Naive thymus-derived CD4-positive, alpha-beta T cell (primary cell): ENCODE measurements at regions of chr3 and their contacts with region 1.

Region 1: GRCh38 chr3:134485718-134486576 is at the starts of genes ANAPC13 and CEP63:
- DNase-seq: peak; percentile 84 to 96 (median 96)
- ATAC-seq: peak; percentile 89
- H3K4me3 ChIP-seq: peak within 1 kb of the TSS; percentile 84
- H3K4me3 Mint-ChIP-seq: peak within 1 kb of the TSS; percentile 89 to 100 (median 99)
- H3K27ac ChIP-seq: peak within 1 kb of the TSS; percentile 87
- H3K27ac Mint-ChIP-seq: peak within 1 kb of the TSS; percentile 94 to 100 (median 99)
- H3K4me1 ChIP-seq: peaks cover 20 to 23% of the 10 kb centered on the region in 2 donors
- H3K4me1 Mint-ChIP-seq: peaks cover 41 to 80% (median 69%) of the 10 kb centered on the region in 7 donors
- H3K27me3 ChIP-seq: no peaks in the 10 kb centered on the region
- H3K27me3 Mint-ChIP-seq: no peaks in the 10 kb centered on the region
- total RNA-seq, gene ANAPC13: 21.2 to 36.7 (median 25.0) TPM
- total RNA-seq, gene CEP63: 21.1 to 42.3 (median 26.4) TPM

Region 2: DNA sequence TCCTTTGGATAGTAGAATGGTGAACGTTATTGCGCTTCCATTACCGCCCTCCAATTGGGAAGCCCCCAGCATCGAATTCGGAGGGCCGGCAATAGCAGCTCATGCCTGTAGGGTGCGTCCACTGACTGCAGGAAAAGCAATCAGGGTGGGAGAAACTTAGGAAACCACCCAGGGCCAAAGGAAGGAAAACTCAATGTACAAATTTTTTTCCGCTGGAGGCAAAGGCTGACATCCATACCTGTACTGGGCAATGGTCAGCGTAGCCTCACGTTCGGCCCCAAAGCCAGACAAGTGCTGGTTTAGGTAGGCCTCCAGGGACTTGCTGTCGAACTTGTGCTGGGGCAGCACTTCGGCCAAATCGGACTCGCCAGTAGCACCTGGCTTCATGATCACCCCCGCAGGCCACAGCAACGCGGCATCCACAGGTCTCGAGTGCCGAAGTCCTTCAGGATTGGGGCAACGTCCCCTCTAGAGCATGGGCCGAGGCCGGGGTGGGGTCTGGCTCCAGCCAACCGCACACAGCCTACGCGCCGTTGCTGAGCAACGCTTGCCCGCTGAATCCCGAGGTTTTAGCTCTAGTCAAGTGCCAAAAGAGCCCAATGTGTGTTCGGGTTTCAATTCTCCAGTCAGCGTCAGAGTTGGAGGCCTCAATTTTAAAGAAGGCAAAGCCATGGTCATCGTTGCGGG is 1826.4 kb before region 1 on chr3 and contains the start of gene ACAD11:
- CTCF ChIA-PET with region 1: no interaction called
- POLR2A ChIA-PET with region 1: no interaction called
- intact Hi-C with region 1: loop called in 1 of 2 experiments (anchors 1 kb)
- DNase-seq: peak in 7 of 9 donors; percentile 2 to 55 (median 18)
- ATAC-seq: peak; percentile 54
- H3K4me3 ChIP-seq: peak within 1 kb of the TSS; percentile 99
- H3K4me3 Mint-ChIP-seq: peak within 1 kb of the TSS; percentile 84 to 98 (median 97)
- H3K27ac ChIP-seq: peak within 1 kb of the TSS; percentile 92
- H3K27ac Mint-ChIP-seq: peak within 1 kb of the TSS; percentile 95 to 98 (median 96)
- H3K4me1 ChIP-seq: peaks cover 9 to 19% of the 10 kb centered on the region in 2 donors
- H3K4me1 Mint-ChIP-seq: peaks cover 42 to 78% (median 67%) of the 10 kb centered on the region in 7 donors
- H3K27me3 ChIP-seq: no peaks in the 10 kb centered on the region
- H3K27me3 Mint-ChIP-seq: no peaks in the 10 kb centered on the region
- total RNA-seq, gene ACAD11: 15.0 to 33.7 (median 27.5) TPM

Region 3: GRCh38 chr3:133661454-133662277 is 824.3 kb before region 1 on chr3 and contains the start of gene TOPBP1:
- CTCF ChIA-PET with region 1: no interaction called
- POLR2A ChIA-PET with region 1: no interaction called
- intact Hi-C with region 1: loop called (anchors 1 to 2 kb)
- DNase-seq: peak; percentile 68 to 88 (median 85)
- ATAC-seq: peak; percentile 90
- H3K4me3 ChIP-seq: peak within 1 kb of the TSS; percentile 80
- H3K4me3 Mint-ChIP-seq: peak within 1 kb of the TSS; percentile 90 to 99 (median 97)
- H3K27ac ChIP-seq: peak within 1 kb of the TSS; percentile 79
- H3K27ac Mint-ChIP-seq: peak within 1 kb of the TSS; percentile 93 to 99 (median 97)
- H3K4me1 ChIP-seq: peaks cover 8 to 25% of the 10 kb centered on the region in 2 donors
- H3K4me1 Mint-ChIP-seq: peaks cover 30 to 53% (median 46%) of the 10 kb centered on the region in 7 donors
- H3K27me3 ChIP-seq: no peaks in the 10 kb centered on the region
- H3K27me3 Mint-ChIP-seq: no peaks in the 10 kb centered on the region
- total RNA-seq, gene TOPBP1: 26.3 to 73.8 (median 37.6) TPM

Region 4: GRCh38 chr3:133927540-133928066 is 558.3 kb before region 1 on chr3:
- CTCF ChIA-PET with region 1: no interaction called
- POLR2A ChIA-PET with region 1: no interaction called
- intact Hi-C with region 1: loop called (anchors 5 to 10 kb)
- DNase-seq: peak; percentile 64 to 88 (median 81)
- ATAC-seq: peak; percentile 97
- H3K4me3 ChIP-seq: peak overlapping the region; percentile 51
- H3K4me3 Mint-ChIP-seq: peak overlapping the region; percentile 58 to 85 (median 74)
- H3K27ac ChIP-seq: peak overlapping the region; percentile 43
- H3K27ac Mint-ChIP-seq: peak overlapping the region in 2 of 9 donors; percentile 56 to 69
- H3K4me1 ChIP-seq: peaks cover 0 to 4% of the 10 kb centered on the region in 2 donors
- H3K4me1 Mint-ChIP-seq: peaks cover 4 to 14% (median 5%) of the 10 kb centered on the region in 7 donors
- H3K27me3 ChIP-seq: peaks cover 0 to 3% of the 10 kb centered on the region in 2 donors
- H3K27me3 Mint-ChIP-seq: peaks cover 5 to 26% (median 10%) of the 10 kb centered on the region in 5 donors

Region 5: DNA sequence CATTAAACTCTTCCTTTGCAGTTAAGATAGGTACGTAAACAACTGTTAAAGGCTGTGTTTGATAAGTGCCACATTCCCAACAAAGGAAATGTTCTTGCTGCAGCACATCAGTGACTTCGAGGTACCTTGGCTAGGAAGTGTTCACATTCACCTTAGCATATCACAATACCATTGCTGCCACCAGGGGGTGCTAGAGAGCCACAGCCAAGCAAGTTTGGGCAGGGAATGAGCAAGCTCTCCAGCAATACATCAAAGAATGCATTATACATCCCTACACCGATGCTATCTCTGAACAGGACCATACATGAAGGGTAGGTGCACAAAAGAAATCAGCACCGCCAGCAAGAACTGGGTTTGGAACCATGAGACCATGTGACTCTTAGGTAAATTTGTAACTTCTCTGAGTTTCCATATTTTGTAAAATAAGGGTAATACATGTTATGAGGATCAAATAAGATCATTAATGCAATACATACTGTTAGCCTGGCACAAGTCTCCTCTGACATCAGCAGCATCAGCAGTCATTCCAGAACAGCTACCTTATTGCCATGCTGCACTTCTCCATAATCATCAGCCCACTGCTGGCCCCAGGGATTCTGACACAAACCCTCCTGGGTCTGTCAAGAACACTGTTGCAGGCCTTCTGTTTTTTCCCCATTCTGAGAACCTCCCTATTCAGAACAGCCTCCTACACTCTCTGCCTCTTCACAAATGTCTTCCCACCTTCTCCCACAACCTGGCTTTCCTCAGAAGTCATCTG is 272.9 kb before region 1 on chr3:
- CTCF ChIA-PET with region 1: interaction called, 4 read pairs
- POLR2A ChIA-PET with region 1: no interaction called
- intact Hi-C with region 1: loop called (anchors 5 kb)
- DNase-seq: peak; percentile 54 to 88 (median 71)
- ATAC-seq: peak; percentile 93
- H3K4me3 ChIP-seq: no peak overlapping the region
- H3K4me3 Mint-ChIP-seq: peak overlapping the region in 1 of 10 donors; percentile 18
- H3K27ac ChIP-seq: no peak overlapping the region
- H3K27ac Mint-ChIP-seq: peak overlapping the region in 5 of 9 donors; percentile 12 to 60 (median 33)
- H3K4me1 ChIP-seq: no peaks in the 10 kb centered on the region
- H3K4me1 Mint-ChIP-seq: peaks cover 7 to 43% (median 30%) of the 10 kb centered on the region in 7 donors
- H3K27me3 ChIP-seq: no peaks in the 10 kb centered on the region
- H3K27me3 Mint-ChIP-seq: no peaks in the 10 kb centered on the region

Region 6: DNA sequence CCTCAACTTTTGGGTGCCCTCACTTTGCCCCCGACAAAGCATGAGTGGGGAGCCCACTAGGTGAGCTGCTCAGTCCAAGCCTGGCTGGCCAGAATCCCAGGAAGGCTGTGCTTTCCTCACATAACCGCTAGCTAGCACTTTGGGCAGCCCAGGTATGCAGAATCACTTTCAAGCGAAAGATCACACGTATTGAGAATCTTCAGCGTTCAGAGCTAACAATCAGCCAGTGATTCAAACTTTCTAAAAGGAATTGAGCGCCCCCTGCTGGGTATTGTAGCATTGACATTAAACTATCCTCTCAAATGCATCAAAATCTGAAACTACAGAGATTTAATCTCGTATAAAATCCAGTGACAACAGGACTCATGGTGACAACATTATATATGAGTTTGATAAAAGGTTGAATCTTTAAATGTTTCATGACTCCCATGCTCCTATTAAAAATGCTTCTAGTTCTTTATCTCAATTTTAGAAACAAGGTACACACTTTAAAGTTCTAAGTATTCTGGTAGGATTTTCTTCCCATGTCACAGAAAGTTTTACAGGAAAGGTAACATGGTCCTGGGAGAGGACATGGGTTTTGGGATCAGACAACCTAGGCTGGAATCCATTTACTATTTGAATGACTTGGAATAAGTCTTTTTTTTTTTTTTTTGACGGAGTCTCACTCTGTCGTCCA is 11.9 kb before region 1 on chr3:
- CTCF ChIA-PET with region 1: interaction called, 10 read pairs
- POLR2A ChIA-PET with region 1: interaction called, 3 read pairs
- intact Hi-C with region 1: no loop called
- DNase-seq: peak; percentile 50 to 81 (median 74)
- ATAC-seq: peak; percentile 89
- H3K4me3 ChIP-seq: no peak overlapping the region
- H3K4me3 Mint-ChIP-seq: no peak overlapping the region
- H3K27ac ChIP-seq: no peak overlapping the region
- H3K27ac Mint-ChIP-seq: peak overlapping the region in 1 of 9 donors; percentile 32
- H3K4me1 ChIP-seq: no peaks in the 10 kb centered on the region
- H3K4me1 Mint-ChIP-seq: peaks cover 0 to 9% (median 0%) of the 10 kb centered on the region in 7 donors
- H3K27me3 ChIP-seq: no peaks in the 10 kb centered on the region
- H3K27me3 Mint-ChIP-seq: no peaks in the 10 kb centered on the region

Region 7: DNA sequence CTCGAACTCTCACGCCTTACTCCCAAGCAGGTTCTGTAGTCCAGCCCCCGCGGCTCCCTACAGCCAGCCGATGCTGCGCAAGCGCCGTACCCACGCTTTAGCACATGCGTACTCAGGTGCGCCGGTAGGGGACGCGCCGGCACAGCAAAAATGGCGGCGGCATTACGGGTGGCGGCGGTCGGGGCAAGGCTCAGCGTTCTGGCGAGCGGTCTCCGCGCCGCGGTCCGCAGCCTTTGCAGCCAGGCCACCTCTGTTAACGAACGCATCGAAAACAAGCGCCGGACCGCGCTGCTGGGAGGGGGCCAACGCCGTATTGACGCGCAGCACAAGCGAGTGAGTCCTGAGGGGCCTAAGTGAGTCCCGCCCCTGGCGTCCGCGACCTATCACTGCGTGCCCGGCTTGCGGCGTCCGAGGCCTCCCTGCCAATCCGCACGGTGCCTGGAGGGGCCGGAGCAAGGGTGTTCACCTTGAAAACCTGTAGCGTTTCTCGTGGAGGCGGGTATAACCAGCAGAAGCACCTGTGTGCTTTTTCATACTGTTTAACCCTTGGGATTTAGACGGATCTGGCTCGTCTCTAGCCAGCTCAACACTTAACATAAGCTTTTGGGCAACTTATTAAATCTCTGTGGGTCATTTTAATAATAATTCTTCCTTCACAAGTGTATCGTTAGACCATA is 1764.4 kb after region 1 on chr3 and contains the start of gene PCCB:
- CTCF ChIA-PET with region 1: no interaction called
- POLR2A ChIA-PET with region 1: no interaction called
- intact Hi-C with region 1: loop called in 1 of 2 experiments (anchors 2 kb)
- DNase-seq: peak; percentile 86 to 95 (median 93)
- ATAC-seq: peak; percentile 99
- H3K4me3 ChIP-seq: peak within 1 kb of the TSS; percentile 80
- H3K4me3 Mint-ChIP-seq: peak within 1 kb of the TSS; percentile 79 to 94 (median 90)
- H3K27ac ChIP-seq: peak within 1 kb of the TSS; percentile 80
- H3K27ac Mint-ChIP-seq: peak within 1 kb of the TSS; percentile 91 to 96 (median 93)
- H3K4me1 ChIP-seq: peaks cover 9% of the 10 kb centered on the region in 2 donors
- H3K4me1 Mint-ChIP-seq: peaks cover 12 to 30% (median 21%) of the 10 kb centered on the region in 7 donors
- H3K27me3 ChIP-seq: no peaks in the 10 kb centered on the region
- H3K27me3 Mint-ChIP-seq: no peaks in the 10 kb centered on the region
- total RNA-seq, gene PCCB: 13.6 to 22.6 (median 16.6) TPM